HCT116 (cell line): ENCODE measurements at regions of chr18 and their contacts with region 1.

Region 1: GRCh38 chr18:25921677-25922421 is 168.6 kb downstream of the SS18 start:
- DNase-seq: peak; percentile 57
- ATAC-seq: peak; percentile 90
- H3K4me3 ChIP-seq: no peak overlapping the region
- H3K27ac ChIP-seq: no peak overlapping the region
- H3K4me1 ChIP-seq: peaks cover 0 to 4% of the 10 kb centered on the region in 2 experiments; a peak in 1 of 4 replicates
- H3K27me3 ChIP-seq: no peaks in the 10 kb centered on the region
- CTCF ChIP-seq: peak; percentile 57 to 82 (median 81); a peak in 5 of 6 replicates
- POLR2A ChIP-seq: no peak
- RAD21 ChIP-seq: peak; percentile 77

Region 2: DNA sequence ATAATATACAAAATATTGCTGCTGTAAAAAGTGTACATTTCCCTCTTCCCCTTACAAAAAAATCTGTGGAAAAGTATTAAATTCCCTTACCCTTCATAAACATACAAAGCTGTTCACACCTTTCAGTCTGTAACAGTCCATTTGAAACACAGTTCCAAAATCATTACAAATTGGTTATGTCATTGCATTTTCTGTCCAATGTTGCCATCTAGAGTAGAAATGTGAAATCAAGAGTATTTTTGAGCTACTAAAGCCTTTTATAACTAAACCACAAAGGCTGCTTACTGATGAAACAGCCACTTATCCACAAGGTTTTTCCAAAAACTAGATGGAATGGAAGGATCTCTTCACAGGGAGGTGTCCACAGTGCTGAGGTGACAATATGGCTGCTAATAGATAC is 96.1 kb after region 1 on chr18:
- CTCF ChIA-PET with region 1: interaction called, 3 read pairs
- POLR2A ChIA-PET with region 1: no interaction called
- RAD21 ChIA-PET with region 1: no interaction called
- intact Hi-C with region 1: loop called (anchors 10 kb)
- DNase-seq: no peak
- ATAC-seq: no peak
- H3K4me3 ChIP-seq: no peak overlapping the region
- H3K27ac ChIP-seq: no peak overlapping the region
- H3K4me1 ChIP-seq: peaks cover 12 to 25% of the 10 kb centered on the region in 2 experiments
- H3K27me3 ChIP-seq: no peaks in the 10 kb centered on the region
- CTCF ChIP-seq: peak in 1 of 3 experiments; percentile 24; a peak in 1 of 6 replicates
- POLR2A ChIP-seq: no peak
- RAD21 ChIP-seq: no peak

Region 3: DNA sequence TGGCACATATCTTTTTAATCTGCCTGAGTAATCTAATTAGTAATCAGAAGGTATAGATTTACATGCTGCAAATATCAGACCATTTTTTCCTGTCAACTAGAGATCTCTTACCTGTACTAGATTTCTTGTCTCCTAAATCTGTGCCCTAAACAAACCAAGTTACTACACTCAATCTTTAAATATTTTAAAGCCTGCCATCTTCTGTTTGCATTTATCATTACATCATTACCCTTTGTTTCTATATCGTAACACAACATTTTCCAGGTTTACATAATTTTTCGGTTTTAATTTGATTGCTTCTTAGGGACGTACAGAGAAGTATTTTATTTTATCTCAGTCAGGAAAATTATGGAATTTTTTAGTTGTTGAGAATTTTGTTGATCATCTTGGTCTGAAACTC is 237.5 kb after region 1 on chr18:
- CTCF ChIA-PET with region 1: interaction called, 3 read pairs
- POLR2A ChIA-PET with region 1: no interaction called
- RAD21 ChIA-PET with region 1: no interaction called
- intact Hi-C with region 1: loop called (anchors 5 kb)
- DNase-seq: peak; percentile 1
- ATAC-seq: no peak
- H3K4me3 ChIP-seq: no peak overlapping the region
- H3K27ac ChIP-seq: no peak overlapping the region
- H3K4me1 ChIP-seq: no peaks in the 10 kb centered on the region
- H3K27me3 ChIP-seq: no peaks in the 10 kb centered on the region
- CTCF ChIP-seq: peak in 2 of 3 experiments; percentile 15 to 43; a peak in 2 of 6 replicates
- POLR2A ChIP-seq: no peak
- RAD21 ChIP-seq: no peak; the same call in 1 of the 2 replicates

Region 4: DNA sequence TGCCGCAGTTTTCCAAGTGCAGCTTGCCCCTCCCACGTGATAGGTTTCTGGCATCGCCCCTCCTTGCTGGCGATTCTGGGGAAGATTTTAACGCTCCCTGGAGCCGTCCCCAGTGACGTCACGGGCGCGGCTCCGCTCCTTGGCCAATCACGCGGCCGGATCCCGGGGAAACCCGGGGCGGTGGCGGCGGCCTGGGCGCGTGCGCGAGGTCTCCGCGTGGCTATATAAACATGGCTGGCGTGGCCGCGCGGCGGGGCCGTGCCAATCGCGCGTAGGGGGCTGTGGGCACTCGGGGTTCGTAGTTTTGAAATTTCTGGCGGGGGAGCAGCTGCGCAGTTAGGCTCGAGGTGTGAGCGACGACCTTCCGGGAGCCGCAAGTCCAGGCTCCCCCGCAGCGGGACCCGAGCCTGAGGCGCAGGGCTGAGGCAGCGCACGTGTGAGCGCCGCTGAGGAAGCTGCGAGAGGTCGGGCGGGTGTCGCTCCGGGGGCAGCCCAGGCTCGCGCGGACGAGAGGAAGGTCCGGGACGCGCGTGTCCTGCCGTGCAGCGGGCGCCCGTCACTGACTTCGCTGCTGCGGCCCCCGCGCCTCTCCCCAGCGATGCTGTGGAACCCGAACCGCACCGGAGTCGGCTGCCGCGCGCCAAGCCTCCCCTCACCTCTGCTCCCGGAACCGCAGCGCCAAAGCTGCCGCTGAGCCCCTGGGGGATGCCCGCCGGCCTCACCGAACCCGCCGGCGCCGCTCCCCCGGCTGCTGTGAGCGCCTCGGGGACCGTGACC is 304.6 kb after region 1 on chr18 and contains the start of gene TAF4B:
- CTCF ChIA-PET with region 1: no interaction called
- POLR2A ChIA-PET with region 1: no interaction called
- RAD21 ChIA-PET with region 1: no interaction called
- intact Hi-C with region 1: no loop called
- DNase-seq: peak; percentile 90
- ATAC-seq: peak; percentile 93
- H3K4me3 ChIP-seq: peak within 1 kb of the TSS; percentile 69 to 84
- H3K27ac ChIP-seq: peak within 1 kb of the TSS; percentile 77
- H3K4me1 ChIP-seq: peaks cover 11 to 21% of the 10 kb centered on the region in 2 experiments
- H3K27me3 ChIP-seq: no peaks in the 10 kb centered on the region
- CTCF ChIP-seq: no peak
- POLR2A ChIP-seq: peak; percentile 88
- RAD21 ChIP-seq: no peak
- total RNA-seq, gene TAF4B: 17.8 TPM